CD8-positive, alpha-beta T cell (primary cell): ENCODE measurements at regions of chr4 and their contacts with region 1.

Region 1: GRCh38 chr4:152079543-152080293 is 318.9 kb upstream of the GATB start:
- DNase-seq: peak in 8 of 9 experiments; percentile 22 to 80 (median 53)
- ATAC-seq: peak; percentile 82
- H3K4me3 ChIP-seq: no peak overlapping the region
- H3K4me3 Mint-ChIP-seq: peak overlapping the region; percentile 26
- H3K27ac ChIP-seq: peak overlapping the region in 1 of 2 experiments; percentile 43
- H3K27ac Mint-ChIP-seq: peak overlapping the region; percentile 92
- H3K4me1 ChIP-seq: peaks cover 41% of the 10 kb centered on the region
- H3K4me1 Mint-ChIP-seq: peaks cover 79% of the 10 kb centered on the region
- H3K27me3 ChIP-seq: no peaks in the 10 kb centered on the region
- H3K27me3 Mint-ChIP-seq: no peaks in the 10 kb centered on the region
- CTCF ChIP-seq: no peak

Region 2: GRCh38 chr4:152094970-152095700 is 15.4 kb after region 1 on chr4:
- CTCF ChIA-PET with region 1: interaction called, 5 read pairs
- POLR2A ChIA-PET with region 1: interaction called, 14 read pairs
- intact Hi-C with region 1: loop called in 1 of 2 experiments (anchors 1 kb)
- DNase-seq: no peak
- ATAC-seq: no peak
- H3K4me3 ChIP-seq: no peak overlapping the region
- H3K4me3 Mint-ChIP-seq: no peak overlapping the region
- H3K27ac ChIP-seq: no peak overlapping the region
- H3K27ac Mint-ChIP-seq: peak overlapping the region; percentile 90
- H3K4me1 ChIP-seq: peaks cover 70% of the 10 kb centered on the region
- H3K4me1 Mint-ChIP-seq: peaks cover 77% of the 10 kb centered on the region
- H3K27me3 ChIP-seq: no peaks in the 10 kb centered on the region
- H3K27me3 Mint-ChIP-seq: no peaks in the 10 kb centered on the region
- CTCF ChIP-seq: no peak

Region 3: GRCh38 chr4:152112887-152113286 is 33.2 kb after region 1 on chr4:
- CTCF ChIA-PET with region 1: no interaction called
- POLR2A ChIA-PET with region 1: no interaction called
- intact Hi-C with region 1: loop called in 1 of 2 experiments (anchors 5 kb)
- DNase-seq: peak in 2 of 9 experiments; percentile 26 to 49
- ATAC-seq: no peak
- H3K4me3 ChIP-seq: no peak overlapping the region
- H3K4me3 Mint-ChIP-seq: no peak overlapping the region
- H3K27ac ChIP-seq: peak overlapping the region in 1 of 2 experiments; percentile 34
- H3K27ac Mint-ChIP-seq: peak overlapping the region; percentile 97
- H3K4me1 ChIP-seq: peaks cover 81% of the 10 kb centered on the region
- H3K4me1 Mint-ChIP-seq: peaks cover 92% of the 10 kb centered on the region
- H3K27me3 ChIP-seq: no peaks in the 10 kb centered on the region
- H3K27me3 Mint-ChIP-seq: no peaks in the 10 kb centered on the region
- CTCF ChIP-seq: no peak